HepG2 (cell line): ENCODE measurements at regions of chr6 and their contacts with region 1.

Region 1: DNA sequence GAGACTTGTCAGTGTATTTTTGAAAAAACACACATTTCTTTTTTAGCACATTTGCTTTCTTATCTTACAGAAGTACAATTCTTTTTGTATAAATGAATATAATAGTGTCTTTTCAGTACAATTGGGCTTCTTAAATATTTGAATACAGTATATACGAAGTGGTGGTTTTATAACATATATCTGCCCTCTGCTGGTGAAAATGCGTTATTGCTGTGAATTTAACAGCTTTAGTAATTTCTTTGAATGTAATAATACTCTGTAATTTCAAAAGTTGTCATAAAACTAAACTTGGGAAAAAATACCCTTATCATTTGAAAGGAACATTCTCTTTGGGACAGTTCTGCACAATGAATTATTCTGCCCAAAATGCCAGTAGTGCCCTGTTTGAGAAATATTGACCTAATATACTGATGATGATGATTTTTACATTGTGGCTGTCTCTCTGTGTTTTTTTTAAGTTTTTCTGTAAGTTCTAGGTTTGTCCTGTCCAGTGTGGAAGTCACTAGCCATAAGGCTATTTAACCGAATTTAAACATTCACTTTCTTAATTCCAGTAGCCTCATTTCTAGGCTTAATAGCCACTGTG is 19.0 kb downstream of the SMAP1 start:
- DNase-seq: peak; percentile 39
- ATAC-seq: no peak
- H3K4me3 ChIP-seq: no peak overlapping the region
- H3K27ac ChIP-seq: no peak overlapping the region
- H3K4me1 ChIP-seq: no peaks in the 10 kb centered on the region
- H3K27me3 ChIP-seq: no peaks in the 10 kb centered on the region
- CTCF ChIP-seq: peak; percentile 48
- EP300 ChIP-seq: no peak
- POLR2A ChIP-seq: no peak
- RAD21 ChIP-seq: 0 out of 2 replicates have a peak, but pooled peaks have one; percentile 13

Region 2: DNA sequence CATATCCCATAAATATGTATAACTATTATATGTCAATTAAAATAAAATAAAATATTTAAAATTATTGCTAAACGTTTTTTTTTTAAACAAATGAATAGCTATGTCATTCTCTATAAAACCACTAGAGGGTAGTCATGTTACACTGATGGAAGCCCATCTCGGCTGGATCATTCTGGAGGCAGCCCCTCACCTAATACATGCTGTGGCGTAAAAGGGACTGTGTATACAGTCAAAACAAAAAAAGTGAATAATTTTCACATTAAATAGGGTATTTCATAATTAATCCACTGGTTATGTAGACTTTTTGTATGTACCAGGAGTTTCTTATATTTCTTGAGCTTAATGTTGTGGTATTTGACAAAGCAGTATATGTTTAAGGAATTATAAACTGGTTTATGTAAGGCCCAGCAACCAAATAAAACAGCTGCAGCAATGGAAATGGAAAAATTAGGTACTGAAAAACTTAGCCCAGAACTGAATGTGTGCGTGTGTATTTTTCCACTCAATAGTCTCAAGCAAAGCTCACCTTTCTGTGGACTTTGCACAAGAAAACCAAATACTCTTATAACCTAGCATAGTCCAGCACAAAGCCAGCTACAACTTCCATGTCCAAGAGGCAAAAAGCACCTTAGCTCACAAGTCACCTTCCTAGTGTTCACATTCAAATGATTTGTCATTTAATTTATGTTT is 465.5 kb before region 1 on chr6:
- CTCF ChIA-PET with region 1: interaction called, 4 read pairs
- POLR2A ChIA-PET with region 1: no interaction called
- in situ Hi-C with region 1: loop called (anchors 25 kb)
- intact Hi-C with region 1: no loop called
- DNase-seq: peak; percentile 12
- ATAC-seq: peak; percentile 84
- H3K4me3 ChIP-seq: peak overlapping the region in 1 of 3 experiments; percentile 10; a peak in 1 of 6 replicates
- H3K27ac ChIP-seq: no peak overlapping the region
- H3K4me1 ChIP-seq: peaks cover 16% of the 10 kb centered on the region
- H3K27me3 ChIP-seq: peaks cover 0 to 4% of the 10 kb centered on the region in 2 experiments; a peak in 1 of 5 replicates
- CTCF ChIP-seq: peak; percentile 66
- EP300 ChIP-seq: no peak
- POLR2A ChIP-seq: no peak
- RAD21 ChIP-seq: 0 out of 2 replicates have a peak, but pooled peaks have one; percentile 35

Region 3: GRCh38 chr6:70310063-70310694 is 376.5 kb before region 1 on chr6:
- CTCF ChIA-PET with region 1: no interaction called
- POLR2A ChIA-PET with region 1: no interaction called
- in situ Hi-C with region 1: no loop called
- intact Hi-C with region 1: loop called (anchors 2 kb)
- DNase-seq: peak; percentile 33
- ATAC-seq: no peak
- H3K4me3 ChIP-seq: no peak overlapping the region
- H3K27ac ChIP-seq: no peak overlapping the region
- H3K4me1 ChIP-seq: no peaks in the 10 kb centered on the region
- H3K27me3 ChIP-seq: no peaks in the 10 kb centered on the region
- CTCF ChIP-seq: peak; percentile 68
- EP300 ChIP-seq: no peak
- POLR2A ChIP-seq: no peak
- RAD21 ChIP-seq: 0 out of 2 replicates have a peak, but pooled peaks have one; percentile 35

Region 4: GRCh38 chr6:70520575-70520974 is 166.1 kb before region 1 on chr6:
- CTCF ChIA-PET with region 1: interaction called, 10 read pairs
- POLR2A ChIA-PET with region 1: no interaction called
- in situ Hi-C with region 1: no loop called
- intact Hi-C with region 1: loop called (anchors 1 kb)
- DNase-seq: peak; percentile 3
- ATAC-seq: no peak
- H3K4me3 ChIP-seq: no peak overlapping the region
- H3K27ac ChIP-seq: no peak overlapping the region
- H3K4me1 ChIP-seq: peaks cover 11% of the 10 kb centered on the region; the same call in 1 of the 2 replicates
- H3K27me3 ChIP-seq: no peaks in the 10 kb centered on the region
- CTCF ChIP-seq: peak; percentile 36
- EP300 ChIP-seq: no peak
- POLR2A ChIP-seq: no peak
- RAD21 ChIP-seq: no peak; the same call in 1 of the 2 replicates

Region 5: DNA sequence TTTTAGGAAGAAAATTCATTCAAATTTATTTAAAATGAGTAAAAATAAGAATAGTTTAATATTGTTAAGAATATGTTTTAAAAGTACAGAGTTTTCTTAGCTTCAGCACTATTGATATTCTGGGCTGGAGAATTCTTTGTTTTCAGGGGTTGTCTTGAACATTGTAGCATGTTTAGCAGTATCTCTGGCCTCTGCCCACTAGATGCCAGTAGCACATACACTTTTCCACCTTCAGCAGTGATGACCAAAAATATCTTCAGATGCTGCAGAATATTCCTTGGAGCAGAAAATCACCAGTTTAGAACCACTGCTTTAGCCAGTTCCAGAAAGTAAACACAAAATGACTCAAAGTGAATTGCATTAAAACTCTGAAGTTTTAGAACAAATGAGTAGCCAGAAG is 139.3 kb before region 1 on chr6:
- CTCF ChIA-PET with region 1: interaction called, 3 read pairs
- POLR2A ChIA-PET with region 1: no interaction called
- in situ Hi-C with region 1: no loop called
- intact Hi-C with region 1: loop called (anchors 2 kb)
- DNase-seq: no peak
- ATAC-seq: 0 out of 3 replicates have a peak, but pooled peaks have one; percentile 50
- H3K4me3 ChIP-seq: no peak overlapping the region
- H3K27ac ChIP-seq: no peak overlapping the region
- H3K4me1 ChIP-seq: no peaks in the 10 kb centered on the region
- H3K27me3 ChIP-seq: no peaks in the 10 kb centered on the region
- CTCF ChIP-seq: peak; percentile 50
- EP300 ChIP-seq: no peak
- POLR2A ChIP-seq: no peak
- RAD21 ChIP-seq: no peak

Region 6: GRCh38 chr6:70638468-70638867 is 48.2 kb before region 1 on chr6:
- CTCF ChIA-PET with region 1: no interaction called
- POLR2A ChIA-PET with region 1: no interaction called
- in situ Hi-C with region 1: no loop called
- intact Hi-C with region 1: no loop called
- DNase-seq: no peak
- ATAC-seq: no peak
- H3K4me3 ChIP-seq: no peak overlapping the region
- H3K27ac ChIP-seq: no peak overlapping the region
- H3K4me1 ChIP-seq: no peaks in the 10 kb centered on the region
- H3K27me3 ChIP-seq: peaks cover 0 to 16% of the 10 kb centered on the region in 2 experiments; a peak in 1 of 5 replicates
- CTCF ChIP-seq: no peak
- EP300 ChIP-seq: no peak
- POLR2A ChIP-seq: no peak
- RAD21 ChIP-seq: no peak

Region 7: DNA sequence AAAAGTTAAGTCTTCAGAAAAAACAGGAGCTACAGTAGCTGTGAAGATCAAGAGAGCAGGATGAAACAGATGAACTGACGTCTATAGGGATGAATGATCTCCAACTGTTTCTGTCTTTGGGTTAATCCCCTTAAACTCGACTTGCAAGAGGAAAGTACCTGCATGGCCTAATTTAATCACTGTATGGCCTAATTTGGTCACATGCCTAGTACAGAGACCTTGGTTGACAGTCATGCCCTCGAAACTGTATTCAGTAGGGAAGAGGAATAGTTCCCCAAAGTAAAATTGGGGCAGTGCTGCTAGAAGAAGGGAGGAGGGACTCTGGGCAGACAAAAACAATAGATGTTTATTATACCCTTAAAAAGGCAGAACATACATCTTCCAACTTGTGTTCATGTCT is 28.9 kb before region 1 on chr6:
- CTCF ChIA-PET with region 1: no interaction called
- POLR2A ChIA-PET with region 1: no interaction called
- in situ Hi-C with region 1: no loop called
- intact Hi-C with region 1: loop called (anchors 1 kb)
- DNase-seq: no peak
- ATAC-seq: no peak
- H3K4me3 ChIP-seq: no peak overlapping the region
- H3K27ac ChIP-seq: no peak overlapping the region
- H3K4me1 ChIP-seq: no peaks in the 10 kb centered on the region
- H3K27me3 ChIP-seq: peaks cover 0 to 8% of the 10 kb centered on the region in 2 experiments; a peak in 2 of 5 replicates
- CTCF ChIP-seq: no peak
- EP300 ChIP-seq: no peak
- POLR2A ChIP-seq: no peak
- RAD21 ChIP-seq: no peak

Region 8: DNA sequence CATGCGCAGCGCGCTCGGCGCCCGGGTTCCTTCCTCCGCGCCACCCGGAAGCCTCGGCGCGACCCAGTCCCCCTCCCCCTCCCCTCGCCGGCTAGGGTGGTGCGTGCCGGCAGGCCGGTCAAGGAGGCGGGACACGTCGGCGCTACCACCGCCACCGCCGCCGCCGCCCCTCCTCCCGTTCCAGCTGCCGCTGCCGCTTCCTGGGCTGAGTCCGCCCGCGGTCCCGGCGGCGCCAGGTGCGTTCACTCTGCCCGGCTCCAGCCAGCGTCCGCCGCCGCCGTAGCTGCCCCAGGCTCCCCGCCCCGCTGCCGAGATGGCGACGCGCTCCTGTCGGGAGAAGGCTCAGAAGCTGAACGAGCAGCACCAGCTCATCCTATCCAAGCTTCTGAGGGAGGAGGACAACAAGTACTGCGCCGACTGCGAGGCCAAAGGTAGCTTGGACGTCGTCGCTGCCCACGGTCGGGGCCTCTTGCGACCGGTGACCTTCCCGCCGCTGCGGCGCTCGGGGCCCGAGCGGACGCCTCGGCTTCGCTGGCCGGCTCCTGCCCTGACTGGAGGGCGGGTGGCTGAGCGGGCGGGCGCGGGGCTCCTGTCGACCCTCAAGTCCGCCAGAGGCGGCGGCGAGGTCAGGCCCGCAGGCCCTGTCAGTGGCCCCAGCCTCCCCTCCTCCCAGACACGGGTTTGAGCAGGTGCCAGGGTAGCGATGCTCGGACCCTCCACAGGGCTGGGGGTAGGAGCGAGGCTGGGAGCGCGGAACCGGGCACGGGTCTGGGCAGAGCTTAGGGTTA is 18.7 kb before region 1 on chr6 and contains the start of gene SMAP1:
- CTCF ChIA-PET with region 1: no interaction called
- POLR2A ChIA-PET with region 1: interaction called, 4 read pairs
- in situ Hi-C with region 1: no loop called
- intact Hi-C with region 1: loop called (anchors 2 kb)
- DNase-seq: peak; percentile 78
- ATAC-seq: peak; percentile 93
- H3K4me3 ChIP-seq: peak within 1 kb of the TSS; percentile 82 to 99 (median 83)
- H3K27ac ChIP-seq: peak within 1 kb of the TSS; percentile 87
- H3K4me1 ChIP-seq: peaks cover 46% of the 10 kb centered on the region
- H3K27me3 ChIP-seq: no peaks in the 10 kb centered on the region
- CTCF ChIP-seq: peak; percentile 21; the same call in 1 of the 2 replicates
- EP300 ChIP-seq: no peak
- POLR2A ChIP-seq: peak; percentile 59 to 71
- RAD21 ChIP-seq: peak; percentile 40
- total RNA-seq, gene SMAP1: 13.4 and 16.1 TPM in 2 replicates

Region 9: DNA sequence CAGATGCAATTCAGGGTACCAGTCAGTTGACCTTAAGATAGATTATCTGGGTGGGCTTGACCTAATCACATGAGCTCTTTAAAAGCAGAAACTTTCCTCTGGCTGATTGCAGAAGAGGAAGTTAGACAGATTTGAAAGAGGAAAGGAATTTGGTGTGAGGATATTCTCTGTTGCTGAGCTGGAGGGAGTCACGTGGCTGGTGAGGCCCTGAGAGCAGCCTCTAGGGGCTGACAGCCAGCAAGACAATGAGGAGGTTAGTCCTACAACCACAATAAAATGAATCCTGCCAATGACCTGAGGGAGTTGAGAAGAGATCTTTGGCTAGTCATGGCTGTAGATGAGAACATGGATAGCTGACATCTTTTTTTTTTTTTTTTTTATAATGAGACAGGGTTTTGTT is 357.3 kb after region 1 on chr6:
- CTCF ChIA-PET with region 1: no interaction called
- POLR2A ChIA-PET with region 1: no interaction called
- in situ Hi-C with region 1: no loop called
- intact Hi-C with region 1: no loop called
- DNase-seq: no peak
- ATAC-seq: peak; percentile 45; the same call in 2 of the 3 replicates
- H3K4me3 ChIP-seq: no peak overlapping the region
- H3K27ac ChIP-seq: no peak overlapping the region
- H3K4me1 ChIP-seq: peaks cover 8% of the 10 kb centered on the region
- H3K27me3 ChIP-seq: no peaks in the 10 kb centered on the region; a peak in 1 of 5 replicates
- CTCF ChIP-seq: no peak
- EP300 ChIP-seq: no peak
- POLR2A ChIP-seq: no peak
- RAD21 ChIP-seq: no peak